ENCODE measurements at regions of chr9 and their contacts with region 1.

Region 1: GRCh38 chr9:5886114-5886939 is 4.4 kb upstream of the MLANA start:
- H3K4me3 ChIP-seq: no peak overlapping the region
- H3K27ac ChIP-seq: no peak overlapping the region
- H3K4me1 ChIP-seq: no peaks in the 10 kb centered on the region
- CTCF ChIP-seq: peak; percentile 85

Region 2: GRCh38 chr9:5832543-5833529 is 53.5 kb before region 1 on chr9 and contains the start of gene ERMP1:
- CTCF ChIA-PET with region 1: interaction called, 41 read pairs
- POLR2A ChIA-PET with region 1: no interaction called
- H3K4me3 ChIP-seq: peak within 1 kb of the TSS; percentile 76
- H3K27ac ChIP-seq: peak within 1 kb of the TSS; percentile 58; the same call in 1 of the 2 replicates
- H3K4me1 ChIP-seq: peaks cover 4% of the 10 kb centered on the region; the same call in 1 of the 2 replicates
- CTCF ChIP-seq: peak; percentile 94

Region 3: GRCh38 chr9:5899292-5899691 is 13.0 kb after region 1 on chr9:
- CTCF ChIA-PET with region 1: interaction called, 36 read pairs
- POLR2A ChIA-PET with region 1: interaction called, 3 read pairs
- H3K4me3 ChIP-seq: no peak overlapping the region
- H3K27ac ChIP-seq: no peak overlapping the region
- H3K4me1 ChIP-seq: no peaks in the 10 kb centered on the region
- CTCF ChIP-seq: no peak

Region 4: GRCh38 chr9:6049798-6050197 is 163.5 kb after region 1 on chr9:
- CTCF ChIA-PET with region 1: interaction called, 77 read pairs
- POLR2A ChIA-PET with region 1: interaction called, 3 read pairs
- H3K4me3 ChIP-seq: no peak overlapping the region
- H3K27ac ChIP-seq: no peak overlapping the region
- H3K4me1 ChIP-seq: no peaks in the 10 kb centered on the region
- CTCF ChIP-seq: no peak

Region 5: GRCh38 chr9:6305954-6306563 is 419.7 kb after region 1 on chr9:
- CTCF ChIA-PET with region 1: interaction called, 57 read pairs
- POLR2A ChIA-PET with region 1: no interaction called
- H3K4me3 ChIP-seq: no peak overlapping the region
- H3K27ac ChIP-seq: no peak overlapping the region
- H3K4me1 ChIP-seq: no peaks in the 10 kb centered on the region
- CTCF ChIP-seq: 0 out of 2 replicates have a peak, but pooled peaks have one; percentile 24

Measured in HEK293 (cell line).